ENCODE measurements at regions of chr13 and their contacts with region 1.

Region 1: DNA sequence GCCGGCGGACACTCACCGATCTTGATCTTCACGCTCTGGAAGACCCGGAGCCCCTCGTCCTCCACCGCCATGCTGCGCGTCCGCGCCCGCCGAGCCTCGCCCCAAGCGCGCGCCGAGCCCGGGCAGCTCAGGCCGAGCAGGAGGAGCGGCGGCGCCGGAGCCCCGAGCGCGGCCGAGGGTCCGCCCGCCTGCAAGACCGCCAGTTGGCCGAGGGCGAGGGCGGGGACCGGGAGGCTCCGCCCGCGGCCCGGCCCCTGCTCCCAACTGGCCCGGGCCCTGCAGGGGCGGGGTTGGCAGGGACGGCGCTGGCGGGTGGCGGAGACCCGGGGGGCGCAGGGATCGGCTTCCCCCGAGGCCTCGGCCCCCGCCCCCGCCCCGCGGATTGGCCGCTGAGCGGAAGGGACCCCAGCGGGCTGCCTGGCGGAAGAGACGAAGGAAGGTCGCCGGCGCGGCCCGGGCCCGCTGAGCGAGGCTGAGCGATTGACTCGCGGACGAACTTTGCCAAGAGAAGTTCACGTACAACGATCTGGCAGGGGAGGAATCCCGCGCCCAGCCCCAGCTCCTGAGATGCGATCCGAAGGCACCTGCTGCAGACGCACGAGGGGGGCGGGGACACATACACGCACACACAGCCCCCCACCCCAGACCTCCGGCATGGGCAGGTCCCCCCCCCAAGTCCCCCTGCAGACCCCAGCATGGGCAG is at the start of gene RASA3:
- DNase-seq: peak; percentile 49 to 76
- H3K4me3 ChIP-seq: peak within 1 kb of the TSS; percentile 78
- H3K27ac ChIP-seq: no peak within 1 kb of the TSS
- H3K4me1 ChIP-seq: peaks cover 16% of the 10 kb centered on the region
- H3K27me3 ChIP-seq: no peaks in the 10 kb centered on the region
- CTCF ChIP-seq: no peak
- total RNA-seq, gene RASA3: 9.7 and 10.0 TPM in 2 replicates

Region 2: DNA sequence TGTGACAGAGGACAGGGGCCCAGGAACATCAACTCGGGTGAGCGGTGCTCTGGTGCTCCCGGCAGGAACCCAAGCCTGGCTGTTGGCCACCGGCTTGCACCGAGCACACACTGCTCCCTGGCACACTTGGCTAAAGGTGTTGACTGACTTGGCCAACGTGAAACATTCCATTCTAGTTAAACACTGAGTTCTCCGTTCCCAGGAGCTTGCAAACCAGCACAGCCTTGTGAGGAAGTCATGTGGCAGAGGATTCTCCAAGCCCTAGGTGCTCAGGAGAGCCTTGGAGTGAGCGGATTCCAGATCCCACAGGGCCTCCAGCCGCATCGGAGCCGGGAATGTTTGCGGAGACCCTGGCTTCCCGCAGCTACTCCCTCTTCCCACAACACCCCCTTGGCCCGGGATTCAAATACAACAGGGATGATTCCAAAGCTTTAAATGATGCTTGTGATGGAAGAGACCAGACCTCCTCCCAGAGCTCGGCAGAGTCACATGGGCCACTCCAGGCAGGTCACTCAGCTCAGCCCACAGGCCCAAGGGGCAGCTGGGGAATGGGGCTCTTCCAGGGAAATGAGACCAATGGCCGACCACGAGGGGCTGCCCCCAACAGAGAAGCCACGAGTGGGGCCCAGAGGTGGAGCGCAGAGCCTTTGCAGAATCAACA is 161.6 kb before region 1 on chr13:
- CTCF ChIA-PET with region 1: no interaction called
- POLR2A ChIA-PET with region 1: no interaction called
- intact Hi-C with region 1: loop called (anchors 5 kb)
- DNase-seq: peak; percentile 69 to 99
- H3K4me3 ChIP-seq: no peak overlapping the region; the same call in 1 of the 2 replicates
- H3K27ac ChIP-seq: peak overlapping the region; percentile 94
- H3K4me1 ChIP-seq: peaks cover 30% of the 10 kb centered on the region
- H3K27me3 ChIP-seq: no peaks in the 10 kb centered on the region
- CTCF ChIP-seq: no peak

Region 3: GRCh38 chr13:114234645-114235421 is 102.3 kb after region 1 on chr13 and contains the start of gene CDC16:
- CTCF ChIA-PET with region 1: no interaction called
- POLR2A ChIA-PET with region 1: no interaction called
- intact Hi-C with region 1: no loop called
- DNase-seq: peak; percentile 84 to 87
- H3K4me3 ChIP-seq: peak within 1 kb of the TSS; percentile 89
- H3K27ac ChIP-seq: peak within 1 kb of the TSS; percentile 61
- H3K4me1 ChIP-seq: peaks cover 18% of the 10 kb centered on the region
- H3K27me3 ChIP-seq: 0 out of 2 replicates have a peak, but pooled peaks cover 3% of the 10 kb centered on the region
- CTCF ChIP-seq: no peak
- total RNA-seq, gene CDC16: 45.7 and 56.8 TPM in 2 replicates